ENCODE measurements at regions of chr1 and their contacts with region 1.

Region 1: DNA sequence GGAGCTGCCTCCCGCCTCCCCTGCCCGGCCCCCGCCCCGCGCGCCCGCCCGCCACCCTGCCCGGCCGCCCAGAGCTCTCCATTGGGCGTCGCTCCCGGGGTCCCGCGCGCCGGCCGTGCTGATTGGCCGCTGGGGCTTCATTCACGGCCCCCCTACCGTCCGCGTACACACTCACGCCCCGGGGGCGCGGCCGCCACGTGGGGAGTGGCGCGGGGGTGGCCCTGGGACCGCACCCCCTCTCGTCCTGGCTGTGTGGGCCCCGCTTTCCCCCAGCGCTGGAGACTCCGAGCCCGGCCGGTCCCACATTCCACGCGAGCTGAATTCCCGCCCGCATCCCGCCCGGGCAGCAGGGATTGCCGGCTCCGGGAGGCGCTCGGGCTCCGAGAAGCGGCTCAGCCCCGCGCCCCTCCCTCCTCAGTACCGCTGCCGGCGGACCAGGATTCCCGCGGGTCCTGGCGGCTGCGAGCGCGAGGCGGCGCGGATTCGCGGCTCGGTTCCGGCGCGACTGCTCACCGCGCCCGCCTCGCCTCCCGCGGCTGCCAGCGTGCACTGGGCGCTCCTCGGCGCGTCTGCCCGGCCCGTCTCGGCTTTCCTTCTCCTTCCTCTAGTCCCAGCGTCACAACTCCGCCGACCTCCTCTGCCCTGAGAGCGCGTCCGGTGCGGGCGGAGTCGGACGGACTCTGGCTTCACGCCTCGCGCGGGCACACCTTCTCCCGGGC is 450 bp upstream of the POU3F1 start:
- DNase-seq: peak; percentile 91
- H3K4me3 ChIP-seq: peak overlapping the region; percentile 35 to 61 (median 52)
- H3K27ac ChIP-seq: peak overlapping the region; percentile 51 to 70 (median 67)
- H3K4me1 ChIP-seq: peaks cover 0 to 35% (median 32%) of the 10 kb centered on the region in 4 donors
- H3K27me3 ChIP-seq: peaks cover 36 to 54% (median 48%) of the 10 kb centered on the region in 3 donors
- CTCF ChIP-seq: no peak
- EP300 ChIP-seq: no peak
- POLR2A ChIP-seq: no peak

Region 2: DNA sequence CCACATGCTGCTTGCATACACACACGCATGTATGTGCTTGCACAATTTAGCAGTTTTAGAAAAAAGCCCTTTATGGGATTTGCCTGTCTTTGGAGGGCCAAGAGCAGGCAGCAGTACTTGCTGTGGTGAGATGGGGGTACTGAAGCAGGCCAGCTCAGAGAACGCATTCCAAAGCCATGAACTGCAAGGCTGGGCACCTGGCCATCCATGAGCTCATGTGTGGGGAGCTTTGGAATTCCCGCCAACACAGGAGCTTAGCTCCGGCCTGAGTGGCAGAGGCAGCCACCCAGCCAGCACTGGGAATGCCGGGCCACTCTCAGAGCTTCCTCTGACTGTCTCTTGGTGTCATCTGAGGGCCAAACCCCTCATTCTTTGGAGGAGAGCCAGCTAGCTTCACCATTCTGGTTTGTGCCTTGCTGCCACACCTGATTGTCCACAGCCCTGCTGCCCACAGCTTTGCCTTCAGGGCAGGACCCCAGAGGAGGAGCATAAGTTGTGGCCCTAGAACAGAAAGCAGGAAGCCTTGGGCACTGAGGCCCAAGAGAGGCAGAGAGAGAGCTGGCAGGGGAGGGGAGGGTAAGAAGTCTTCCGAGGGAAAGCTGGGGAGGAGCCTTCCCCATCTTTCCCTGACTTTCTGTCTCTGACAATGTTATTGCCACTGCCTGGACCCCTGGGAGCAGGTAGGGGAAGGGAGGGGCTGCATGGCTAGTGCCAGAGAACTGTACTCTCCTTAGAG is 91.6 kb after region 1 on chr1:
- intact Hi-C with region 1: loop called (anchors 10 kb)
- DNase-seq: peak; percentile 91
- H3K4me3 ChIP-seq: no peak overlapping the region
- H3K27ac ChIP-seq: peak overlapping the region; percentile 33 to 78 (median 60)
- H3K4me1 ChIP-seq: peaks cover 0 to 32% (median 22%) of the 10 kb centered on the region in 4 donors
- H3K27me3 ChIP-seq: peaks cover 0 to 37% (median 26%) of the 10 kb centered on the region in 3 donors
- CTCF ChIP-seq: peak in 2 of 4 experiments; percentile 30 to 80
- EP300 ChIP-seq: no peak
- POLR2A ChIP-seq: no peak